Psoas muscle (tissue), 8 donors: ENCODE measurements at regions of chr5 and their contacts with region 1.

Region 1: DNA sequence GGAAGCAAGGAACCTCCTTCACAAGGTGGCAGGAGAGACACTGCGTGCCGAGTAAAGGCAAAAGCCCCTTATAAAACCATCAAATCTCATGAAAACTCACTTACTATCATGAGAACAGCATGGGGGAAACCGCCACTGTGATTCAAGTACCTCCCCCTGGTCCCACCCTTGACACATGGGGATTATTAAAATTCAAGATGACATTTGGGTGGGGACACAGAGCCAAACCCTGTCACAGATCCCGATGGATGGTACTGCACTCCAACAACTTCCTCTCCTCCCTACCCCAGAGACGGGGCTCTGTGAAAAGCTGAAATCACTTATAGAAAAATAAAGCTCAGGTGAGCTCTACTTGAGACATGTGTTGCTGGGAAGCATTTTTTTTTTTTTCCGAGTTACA is 10.3 kb upstream of the ADCY2 start:
- DNase-seq: no peak
- ATAC-seq: no peak
- H3K4me3 ChIP-seq: no peak overlapping the region
- H3K27ac ChIP-seq: no peak overlapping the region
- H3K4me1 ChIP-seq: no peaks in the 10 kb centered on the region
- H3K27me3 ChIP-seq: peaks cover 0 to 2% (median 0%) of the 10 kb centered on the region in 3 donors
- CTCF ChIP-seq: no peak

Region 2: DNA sequence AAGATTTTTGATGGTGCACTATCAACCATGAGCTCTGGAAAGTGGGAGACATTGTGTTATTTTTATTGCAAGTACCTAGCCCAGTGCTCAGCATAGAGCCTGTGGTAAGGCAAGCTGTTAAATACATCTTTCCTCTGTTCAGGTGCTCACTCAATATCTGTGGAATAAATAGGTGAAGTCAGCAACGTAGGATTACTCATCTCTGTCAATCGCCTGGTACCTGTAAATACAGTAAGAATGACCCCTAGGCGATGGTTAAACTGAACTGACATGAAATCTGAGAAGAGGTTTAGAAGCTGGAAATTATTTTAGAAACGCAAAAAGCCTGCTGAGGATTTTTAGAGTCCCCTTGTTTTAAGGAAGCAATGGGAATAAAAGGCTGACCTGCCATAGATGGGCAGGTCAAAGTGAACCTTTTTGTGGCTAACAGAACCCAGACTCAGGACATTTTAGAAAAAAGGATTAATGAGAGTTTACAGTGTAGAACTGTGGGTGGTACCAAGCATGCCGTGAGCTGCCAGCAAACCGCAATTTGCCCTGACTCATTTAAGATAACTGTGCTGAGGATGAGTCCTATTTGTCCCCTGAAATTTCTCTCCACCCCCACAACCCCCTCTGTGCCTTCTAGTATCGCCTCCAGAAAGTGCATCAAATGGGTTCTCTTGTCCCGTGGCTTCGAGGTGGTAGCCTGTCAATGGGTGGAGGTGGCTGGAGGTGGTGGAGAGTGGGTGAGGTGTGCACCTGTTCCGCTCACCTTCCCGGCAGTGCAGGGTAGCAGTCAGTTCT is 1382.4 kb before region 1 on chr5:
- intact Hi-C with region 1: loop called in 1 of 2 experiments (anchors 5 kb)
- DNase-seq: no peak
- ATAC-seq: no peak
- H3K4me3 ChIP-seq: no peak overlapping the region
- H3K27ac ChIP-seq: no peak overlapping the region
- H3K4me1 ChIP-seq: no peaks in the 10 kb centered on the region
- H3K27me3 ChIP-seq: peaks cover 0 to 3% (median 0%) of the 10 kb centered on the region in 3 donors
- CTCF ChIP-seq: no peak

Region 3: GRCh38 chr5:7565559-7565958 is 179.9 kb after region 1 on chr5:
- intact Hi-C with region 1: no loop called
- DNase-seq: no peak
- ATAC-seq: no peak
- H3K4me3 ChIP-seq: no peak overlapping the region
- H3K27ac ChIP-seq: no peak overlapping the region
- H3K4me1 ChIP-seq: no peaks in the 10 kb centered on the region
- H3K27me3 ChIP-seq: no peaks in the 10 kb centered on the region
- CTCF ChIP-seq: no peak

Region 4: GRCh38 chr5:7650755-7651154 is 265.1 kb after region 1 on chr5:
- intact Hi-C with region 1: no loop called
- DNase-seq: no peak
- ATAC-seq: peak; percentile 87 to 95 (median 93)
- H3K4me3 ChIP-seq: no peak overlapping the region
- H3K27ac ChIP-seq: peak overlapping the region; percentile 18
- H3K4me1 ChIP-seq: peaks cover 33% of the 10 kb centered on the region
- H3K27me3 ChIP-seq: peaks cover 0 to 2% (median 0%) of the 10 kb centered on the region in 3 donors
- CTCF ChIP-seq: no peak

Region 5: GRCh38 chr5:8288334-8288733 is 902.7 kb after region 1 on chr5:
- intact Hi-C with region 1: no loop called
- DNase-seq: no peak
- ATAC-seq: no peak
- H3K4me3 ChIP-seq: no peak overlapping the region
- H3K27ac ChIP-seq: no peak overlapping the region
- H3K4me1 ChIP-seq: no peaks in the 10 kb centered on the region
- H3K27me3 ChIP-seq: no peaks in the 10 kb centered on the region
- CTCF ChIP-seq: no peak